Activated B cell treated with CpG ODN at 0.5 μM for 24 hours (primary cell): ENCODE measurements at regions of chr6 and their contacts with region 1.

Region 1: GRCh38 chr6:170529839-170530469 is 23.2 kb downstream of the PSMB1 start:
- DNase-seq: peak; percentile 31
- ATAC-seq: peak; percentile 61
- H3K4me3 Mint-ChIP-seq: no peak overlapping the region
- H3K27ac Mint-ChIP-seq: no peak overlapping the region
- H3K4me1 Mint-ChIP-seq: no peaks in the 10 kb centered on the region
- H3K27me3 Mint-ChIP-seq: no peaks in the 10 kb centered on the region
- CTCF ChIP-seq: peak; percentile 61

Region 2: DNA sequence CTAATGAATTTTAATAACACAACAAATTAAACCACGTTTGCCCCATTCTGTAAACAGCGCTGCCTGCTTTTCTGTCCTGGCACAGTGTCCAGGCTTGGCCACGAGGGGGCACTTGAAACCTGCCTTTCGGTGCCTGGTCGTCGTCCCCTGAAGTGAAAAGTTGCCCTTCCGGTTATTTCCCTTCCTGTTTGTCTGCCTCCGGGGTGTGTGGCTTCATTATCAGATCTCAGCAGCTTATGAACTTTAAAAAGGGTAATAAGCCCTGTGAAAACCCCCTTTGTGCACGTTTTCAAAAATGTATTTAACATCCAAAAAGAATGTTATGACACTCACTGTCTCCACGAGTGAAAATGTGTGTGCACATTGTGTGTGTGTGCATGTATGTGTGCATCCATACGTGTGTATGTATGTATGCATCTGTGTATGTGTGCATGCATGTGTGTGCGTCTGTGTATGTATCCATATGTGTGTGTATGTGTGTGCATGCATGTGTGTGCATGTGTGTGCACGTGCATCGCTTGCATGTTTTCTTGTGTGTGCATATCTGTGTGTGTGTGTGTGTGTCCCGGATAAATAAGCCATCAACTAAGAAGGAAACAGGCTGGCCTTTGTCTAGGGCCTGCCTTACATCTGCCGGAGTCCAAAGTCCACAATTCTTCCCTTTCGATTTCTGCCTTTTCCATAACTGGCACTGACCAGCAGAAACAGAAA is 1634.7 kb before region 1 on chr6:
- CTCF ChIA-PET with region 1: interaction called, 5 read pairs
- POLR2A ChIA-PET with region 1: no interaction called
- intact Hi-C with region 1: loop called (anchors 1 kb)
- DNase-seq: peak; percentile 48
- ATAC-seq: peak; percentile 88
- H3K4me3 Mint-ChIP-seq: peak overlapping the region; percentile 51
- H3K27ac Mint-ChIP-seq: no peak overlapping the region
- H3K4me1 Mint-ChIP-seq: peaks cover 6% of the 10 kb centered on the region
- H3K27me3 Mint-ChIP-seq: peaks cover 6% of the 10 kb centered on the region
- CTCF ChIP-seq: peak; percentile 98

Region 3: DNA sequence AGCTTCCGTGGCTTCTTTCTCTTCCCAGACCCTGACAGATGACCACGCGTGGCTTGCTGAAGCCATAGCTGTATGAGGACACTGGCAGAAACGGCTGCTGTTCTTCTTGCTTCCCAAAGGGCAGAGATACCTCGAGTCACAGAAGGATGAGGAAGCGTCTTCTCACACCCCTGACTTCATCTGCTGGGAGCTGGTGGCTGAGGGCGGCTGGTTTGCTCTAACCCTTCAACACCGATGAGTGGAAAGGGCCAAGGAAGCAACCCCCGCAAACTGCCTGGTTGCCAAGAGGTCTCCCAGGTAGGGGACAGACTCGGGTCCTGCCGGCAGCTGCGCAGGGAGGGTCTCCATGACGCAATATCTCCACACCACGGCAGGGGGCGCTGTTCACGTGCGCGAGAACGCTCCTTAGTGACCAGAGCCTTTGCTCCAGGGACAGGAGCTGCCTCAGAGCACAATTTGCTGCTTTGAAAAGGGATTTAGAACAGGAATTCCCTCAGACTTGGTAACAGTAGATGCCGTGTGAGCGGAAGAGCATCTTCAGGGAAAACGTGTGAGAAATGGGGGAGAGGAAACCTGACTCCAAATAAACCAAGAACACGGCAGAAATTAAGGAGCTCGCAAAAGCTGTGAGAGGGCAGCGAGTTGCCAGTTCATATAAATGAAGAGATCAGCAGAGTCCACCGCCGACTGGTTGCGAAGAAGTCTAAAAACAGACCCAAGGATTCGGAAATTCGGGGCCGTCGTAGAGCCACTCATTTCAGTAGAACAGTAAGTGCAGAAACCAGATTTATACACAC is 698.3 kb before region 1 on chr6:
- CTCF ChIA-PET with region 1: interaction called, 27 read pairs
- POLR2A ChIA-PET with region 1: no interaction called
- intact Hi-C with region 1: loop called (anchors 1 kb)
- DNase-seq: peak; percentile 57
- ATAC-seq: peak; percentile 64
- H3K4me3 Mint-ChIP-seq: no peak overlapping the region
- H3K27ac Mint-ChIP-seq: no peak overlapping the region
- H3K4me1 Mint-ChIP-seq: no peaks in the 10 kb centered on the region
- H3K27me3 Mint-ChIP-seq: peaks cover 29% of the 10 kb centered on the region
- CTCF ChIP-seq: no peak

Region 4: GRCh38 chr6:169950558-169950957 is 579.4 kb before region 1 on chr6:
- CTCF ChIA-PET with region 1: no interaction called
- POLR2A ChIA-PET with region 1: no interaction called
- intact Hi-C with region 1: loop called (anchors 5 kb)
- DNase-seq: peak; percentile 9
- ATAC-seq: no peak
- H3K4me3 Mint-ChIP-seq: no peak overlapping the region
- H3K27ac Mint-ChIP-seq: no peak overlapping the region
- H3K4me1 Mint-ChIP-seq: no peaks in the 10 kb centered on the region
- H3K27me3 Mint-ChIP-seq: no peaks in the 10 kb centered on the region
- CTCF ChIP-seq: no peak

Region 5: GRCh38 chr6:169976301-169977081 is 553.5 kb before region 1 on chr6:
- CTCF ChIA-PET with region 1: no interaction called
- POLR2A ChIA-PET with region 1: no interaction called
- intact Hi-C with region 1: no loop called
- DNase-seq: no peak
- ATAC-seq: no peak
- H3K4me3 Mint-ChIP-seq: no peak overlapping the region
- H3K27ac Mint-ChIP-seq: no peak overlapping the region
- H3K4me1 Mint-ChIP-seq: no peaks in the 10 kb centered on the region
- H3K27me3 Mint-ChIP-seq: peaks cover 4% of the 10 kb centered on the region
- CTCF ChIP-seq: no peak